Mucosa of descending colon (tissue), 3 donors: ENCODE measurements at regions of chr4 and their contacts with region 1.

Region 1: GRCh38 chr4:89434364-89434988 is 126.9 kb upstream of the GPRIN3 start:
- DNase-seq: peak in 1 of 3 donors; percentile 21
- ATAC-seq: peak; percentile 79
- H3K4me3 ChIP-seq: no peak overlapping the region
- H3K4me1 ChIP-seq: no peaks in the 10 kb centered on the region
- CTCF ChIP-seq: peak; percentile 46

Region 2: DNA sequence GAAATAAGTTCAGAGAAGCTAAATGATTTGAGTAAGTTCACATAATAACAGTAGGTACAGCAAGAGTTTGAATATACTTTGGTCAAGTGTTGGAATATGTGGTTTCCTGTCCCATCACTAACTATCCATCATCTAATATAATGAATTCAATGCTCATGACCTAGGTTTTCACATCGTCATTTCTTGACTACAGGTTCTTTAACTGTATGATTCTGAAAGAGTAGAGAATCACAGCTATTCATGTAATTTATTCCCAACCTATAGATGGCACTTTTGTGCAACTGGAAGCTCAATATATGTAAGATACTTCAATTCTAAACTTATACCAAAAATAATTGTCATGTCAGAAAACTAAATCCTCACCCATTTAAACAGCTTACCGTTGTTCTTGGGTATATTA is 270.1 kb before region 1 on chr4:
- intact Hi-C with region 1: loop called in 1 of 2 experiments (anchors 5 kb)
- DNase-seq: no peak
- ATAC-seq: no peak
- H3K4me3 ChIP-seq: no peak overlapping the region
- H3K4me1 ChIP-seq: no peaks in the 10 kb centered on the region
- CTCF ChIP-seq: no peak

Region 3: GRCh38 chr4:89226665-89227574 is 207.6 kb before region 1 on chr4:
- intact Hi-C with region 1: loop called (anchors 2 to 5 kb)
- DNase-seq: peak in 2 of 3 donors; percentile 77 to 97
- ATAC-seq: peak; percentile 99
- H3K4me3 ChIP-seq: no peak overlapping the region
- H3K4me1 ChIP-seq: no peaks in the 10 kb centered on the region
- CTCF ChIP-seq: peak; percentile 42

Region 4: GRCh38 chr4:89549907-89550306 is 115.4 kb after region 1 on chr4:
- intact Hi-C with region 1: no loop called
- DNase-seq: no peak
- ATAC-seq: no peak
- H3K4me3 ChIP-seq: no peak overlapping the region
- H3K4me1 ChIP-seq: no peaks in the 10 kb centered on the region
- CTCF ChIP-seq: no peak

Region 5: DNA sequence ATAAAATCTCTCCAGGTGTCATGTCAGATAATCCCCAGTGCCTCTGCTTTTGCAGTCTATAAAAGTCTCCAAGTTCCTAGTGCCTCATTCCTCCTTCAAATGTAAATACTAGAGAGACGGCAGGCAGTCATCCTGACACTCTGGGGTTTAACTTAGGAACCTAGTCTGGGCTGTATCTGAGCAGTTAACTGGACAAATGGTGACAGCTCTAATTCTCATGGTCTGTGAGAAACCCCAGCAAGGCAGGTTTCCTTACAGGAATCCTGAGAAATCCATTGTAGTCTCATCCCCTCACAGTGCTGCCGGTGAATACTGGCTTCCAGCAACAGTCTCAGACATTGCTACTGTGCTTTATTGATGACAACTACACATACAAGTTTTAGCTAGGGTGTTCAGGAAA is 155.7 kb after region 1 on chr4:
- intact Hi-C with region 1: no loop called
- DNase-seq: no peak
- ATAC-seq: no peak
- H3K4me3 ChIP-seq: no peak overlapping the region
- H3K4me1 ChIP-seq: no peaks in the 10 kb centered on the region
- CTCF ChIP-seq: no peak

Region 6: DNA sequence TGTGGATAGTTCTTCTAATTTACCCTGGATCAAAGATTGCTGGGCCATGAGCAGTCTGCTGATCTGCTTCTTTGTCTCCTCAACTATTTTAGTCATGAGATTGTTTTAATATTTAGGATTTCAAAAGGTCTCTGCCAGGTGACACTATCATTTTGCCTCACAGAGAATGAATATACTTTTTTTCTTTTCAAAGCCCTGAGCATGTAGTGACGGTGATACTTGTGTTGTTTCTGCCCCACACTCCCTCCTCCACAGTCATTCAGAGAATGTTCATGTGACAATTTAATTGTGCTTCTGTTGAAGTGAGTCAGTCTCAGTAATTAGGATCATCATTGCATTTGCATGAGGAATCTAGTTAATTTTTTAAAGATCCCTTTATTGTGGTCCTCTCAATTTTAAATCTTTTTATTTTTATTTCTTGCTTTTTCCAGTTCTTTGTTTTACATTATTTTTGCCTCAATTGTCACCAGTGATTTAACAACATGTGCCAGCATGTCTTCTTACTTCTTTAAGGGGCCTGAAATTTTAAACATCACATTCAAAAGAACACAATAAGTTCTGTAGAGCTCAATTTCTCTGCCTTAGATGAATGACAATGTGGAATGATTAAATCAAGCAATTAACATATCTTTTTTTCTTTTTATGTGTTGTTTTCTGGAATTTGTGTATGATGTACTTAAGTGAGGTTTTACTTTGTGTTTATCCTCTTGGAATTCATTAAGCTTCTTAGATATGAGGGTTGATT is 472.5 kb after region 1 on chr4:
- intact Hi-C with region 1: loop called in 1 of 2 experiments (anchors 5 kb)
- DNase-seq: no peak
- ATAC-seq: no peak
- H3K4me3 ChIP-seq: no peak overlapping the region
- H3K4me1 ChIP-seq: no peaks in the 10 kb centered on the region
- CTCF ChIP-seq: no peak

Region 7: GRCh38 chr4:90570615-90571014 is 1136.1 kb after region 1 on chr4:
- intact Hi-C with region 1: no loop called
- DNase-seq: no peak
- ATAC-seq: no peak
- H3K4me3 ChIP-seq: no peak overlapping the region
- H3K4me1 ChIP-seq: no peaks in the 10 kb centered on the region
- CTCF ChIP-seq: no peak